Colonic mucosa (tissue), 4 donors: ENCODE measurements at regions of chr2 and their contacts with region 1.

Region 1: GRCh38 chr2:206981739-206982340 is 42.5 kb downstream of the CPO start:
- DNase-seq: peak; percentile 27
- H3K4me3 ChIP-seq: no peak overlapping the region
- H3K27ac ChIP-seq: no peak overlapping the region
- H3K4me1 ChIP-seq: no peaks in the 10 kb centered on the region
- H3K27me3 ChIP-seq: no peaks in the 10 kb centered on the region
- CTCF ChIP-seq: peak; percentile 54

Region 2: GRCh38 chr2:206693399-206694137 is 288.3 kb before region 1 on chr2:
- intact Hi-C with region 1: loop called (anchors 10 kb)
- DNase-seq: peak; percentile 29
- H3K4me3 ChIP-seq: no peak overlapping the region
- H3K27ac ChIP-seq: no peak overlapping the region
- H3K4me1 ChIP-seq: no peaks in the 10 kb centered on the region
- H3K27me3 ChIP-seq: no peaks in the 10 kb centered on the region
- CTCF ChIP-seq: peak; percentile 43

Region 3: DNA sequence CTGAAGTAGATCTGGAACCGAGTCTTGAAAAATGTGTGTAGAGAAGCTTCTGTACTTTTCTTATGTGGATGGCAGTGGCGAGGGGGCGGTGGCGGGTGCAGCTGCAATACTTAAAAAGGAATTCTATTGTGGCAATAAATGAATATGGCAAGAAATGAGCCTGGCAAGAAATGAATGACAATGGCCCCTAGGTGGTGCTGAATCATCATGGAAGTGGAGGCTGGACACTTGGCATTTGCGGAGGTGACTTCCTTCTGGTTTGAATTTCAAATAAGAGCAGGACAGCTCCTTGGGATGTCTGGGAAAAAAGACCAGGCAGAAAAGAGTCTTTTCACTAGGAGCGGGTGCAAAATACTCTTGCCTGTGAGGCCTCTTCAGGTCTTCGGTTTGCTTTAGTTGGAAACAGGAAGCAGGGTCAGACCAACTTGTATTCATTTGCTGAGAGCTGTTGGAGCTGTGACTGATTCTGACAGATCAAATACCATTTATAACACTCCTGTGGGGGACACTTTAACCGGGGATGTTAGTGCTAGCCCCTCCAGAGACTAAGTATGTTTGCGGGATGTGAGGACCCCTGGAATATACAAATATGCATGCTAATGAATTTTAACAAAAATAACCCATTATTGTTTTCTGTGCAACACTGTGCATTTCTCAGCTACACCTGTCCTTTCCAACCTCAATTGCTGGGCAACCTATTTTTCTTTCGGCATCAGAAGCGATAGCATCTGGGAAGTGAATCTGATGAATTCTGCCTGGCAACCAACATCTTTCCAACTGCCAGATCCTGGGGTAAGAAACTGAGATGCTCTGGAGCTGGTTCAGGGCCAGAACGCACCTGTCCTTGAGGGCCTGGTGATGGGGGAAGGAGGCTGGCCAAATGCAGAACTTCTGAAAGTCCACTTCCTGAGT is 181.1 kb before region 1 on chr2:
- intact Hi-C with region 1: loop called (anchors 5 kb)
- DNase-seq: peak; percentile 56
- H3K4me3 ChIP-seq: no peak overlapping the region
- H3K27ac ChIP-seq: no peak overlapping the region
- H3K4me1 ChIP-seq: no peaks in the 10 kb centered on the region
- H3K27me3 ChIP-seq: no peaks in the 10 kb centered on the region
- CTCF ChIP-seq: peak; percentile 46

Region 4: DNA sequence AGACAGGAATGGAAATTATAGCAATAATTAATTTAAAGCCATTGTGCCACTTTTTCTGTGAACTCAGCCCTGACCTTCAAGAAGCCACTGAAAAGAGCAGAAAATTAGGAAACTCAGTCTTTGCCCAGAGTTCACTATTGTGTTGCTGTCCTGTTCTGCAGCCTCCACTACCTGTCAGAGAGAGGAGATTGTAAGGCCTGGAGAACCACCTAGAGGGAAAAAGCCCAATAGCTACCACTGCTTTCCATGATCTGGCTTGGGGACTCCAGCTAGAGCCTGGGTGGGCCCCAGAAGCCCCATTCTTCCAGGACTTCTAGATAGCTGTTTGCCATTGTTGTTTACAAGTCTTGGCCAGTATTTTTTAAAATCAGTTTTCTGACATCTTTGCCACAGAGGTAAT is 360.0 kb after region 1 on chr2:
- intact Hi-C with region 1: loop called (anchors 10 kb)
- DNase-seq: no peak
- H3K4me3 ChIP-seq: no peak overlapping the region
- H3K27ac ChIP-seq: no peak overlapping the region
- H3K4me1 ChIP-seq: no peaks in the 10 kb centered on the region
- H3K27me3 ChIP-seq: no peaks in the 10 kb centered on the region
- CTCF ChIP-seq: no peak

Region 5: DNA sequence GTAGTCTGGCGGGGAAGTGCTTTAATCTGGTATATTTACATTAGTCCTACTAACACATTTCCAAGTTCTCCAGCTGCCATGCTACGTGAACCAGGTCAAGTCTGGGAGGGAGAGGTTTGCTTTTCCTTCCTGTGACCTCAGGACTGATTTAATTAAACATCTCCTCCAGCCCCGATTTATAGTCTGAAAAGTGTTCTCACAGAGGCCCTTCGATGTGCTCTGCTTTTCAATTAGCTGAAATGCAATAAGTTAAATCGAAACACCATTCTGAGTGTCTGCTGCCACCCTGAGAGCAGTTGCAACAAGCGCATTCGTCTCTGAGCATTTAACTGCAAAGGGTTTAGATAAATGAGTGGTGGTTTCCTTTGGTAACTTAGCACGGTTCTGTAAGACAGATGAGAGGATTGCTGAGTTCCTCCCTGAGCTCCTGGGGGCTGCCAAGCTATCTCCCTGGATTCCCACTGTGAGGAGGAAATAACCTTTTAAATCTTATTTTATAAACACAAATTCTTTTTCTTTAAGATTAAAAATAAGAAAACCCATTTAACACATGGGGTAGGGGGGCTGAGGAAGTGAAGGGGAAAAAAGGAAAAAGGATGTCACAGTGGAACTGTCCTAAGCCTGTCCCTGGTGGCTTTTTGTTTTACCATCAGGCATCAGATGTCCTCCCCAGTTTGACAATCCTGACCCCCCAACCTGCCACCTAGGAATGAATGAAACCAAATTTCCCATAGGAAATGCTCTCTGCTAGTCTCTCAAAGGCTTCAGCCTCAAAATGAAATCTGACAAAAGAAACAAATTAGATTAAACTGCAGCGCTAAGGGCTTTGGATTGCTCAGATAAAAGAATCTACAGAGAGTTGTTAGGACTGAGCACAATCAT is 491.4 kb after region 1 on chr2:
- intact Hi-C with region 1: loop called (anchors 5 kb)
- DNase-seq: no peak
- H3K4me3 ChIP-seq: no peak overlapping the region
- H3K27ac ChIP-seq: no peak overlapping the region
- H3K4me1 ChIP-seq: no peaks in the 10 kb centered on the region
- H3K27me3 ChIP-seq: no peaks in the 10 kb centered on the region
- CTCF ChIP-seq: no peak